CD8-positive, alpha-beta memory T cell (primary cell): ENCODE measurements at regions of chr14 and their contacts with region 1.

Region 1: GRCh38 chr14:50860478-50861086 is 11.3 kb upstream of the ABHD12B start:
- DNase-seq: peak; percentile 79 to 91 (median 84)
- H3K4me3 ChIP-seq: peak overlapping the region; percentile 85
- H3K4me3 Mint-ChIP-seq: peak overlapping the region; percentile 90 to 99 (median 94)
- H3K27ac ChIP-seq: peak overlapping the region; percentile 43
- H3K27ac Mint-ChIP-seq: peak overlapping the region in 7 of 8 donors; percentile 88 to 96 (median 91)
- H3K4me1 ChIP-seq: peaks cover 7% of the 10 kb centered on the region
- H3K4me1 Mint-ChIP-seq: peaks cover 10 to 13% (median 10%) of the 10 kb centered on the region in 3 donors
- H3K27me3 ChIP-seq: no peaks in the 10 kb centered on the region
- H3K27me3 Mint-ChIP-seq: peaks cover 0 to 3% of the 10 kb centered on the region in 2 donors

Region 2: GRCh38 chr14:50619556-50620141 is 240.9 kb before region 1 on chr14:
- CTCF ChIA-PET with region 1: interaction called, 12 read pairs
- POLR2A ChIA-PET with region 1: no interaction called
- DNase-seq: no peak
- H3K4me3 ChIP-seq: no peak overlapping the region
- H3K4me3 Mint-ChIP-seq: no peak overlapping the region
- H3K27ac ChIP-seq: no peak overlapping the region
- H3K27ac Mint-ChIP-seq: no peak overlapping the region
- H3K4me1 ChIP-seq: no peaks in the 10 kb centered on the region
- H3K4me1 Mint-ChIP-seq: no peaks in the 10 kb centered on the region
- H3K27me3 ChIP-seq: no peaks in the 10 kb centered on the region
- H3K27me3 Mint-ChIP-seq: no peaks in the 10 kb centered on the region

Region 3: GRCh38 chr14:50778721-50779483 is 81.7 kb before region 1 on chr14:
- CTCF ChIA-PET with region 1: interaction called, 122 read pairs
- POLR2A ChIA-PET with region 1: interaction called, 14 read pairs
- DNase-seq: no peak
- H3K4me3 ChIP-seq: no peak overlapping the region
- H3K4me3 Mint-ChIP-seq: peak overlapping the region in 6 of 7 donors; percentile 2 to 49 (median 33)
- H3K27ac ChIP-seq: no peak overlapping the region
- H3K27ac Mint-ChIP-seq: peak overlapping the region; percentile 27 to 95 (median 82)
- H3K4me1 ChIP-seq: peaks cover 39% of the 10 kb centered on the region
- H3K4me1 Mint-ChIP-seq: peaks cover 54 to 84% (median 68%) of the 10 kb centered on the region in 3 donors
- H3K27me3 ChIP-seq: no peaks in the 10 kb centered on the region
- H3K27me3 Mint-ChIP-seq: no peaks in the 10 kb centered on the region

Region 4: GRCh38 chr14:50808053-50808452 is 52.5 kb before region 1 on chr14:
- CTCF ChIA-PET with region 1: interaction called, 10 read pairs
- POLR2A ChIA-PET with region 1: no interaction called
- DNase-seq: no peak
- H3K4me3 ChIP-seq: no peak overlapping the region
- H3K4me3 Mint-ChIP-seq: peak overlapping the region in 1 of 7 donors; percentile 48
- H3K27ac ChIP-seq: no peak overlapping the region
- H3K27ac Mint-ChIP-seq: peak overlapping the region in 3 of 8 donors; percentile 32 to 48 (median 46)
- H3K4me1 ChIP-seq: peaks cover 42% of the 10 kb centered on the region
- H3K4me1 Mint-ChIP-seq: peaks cover 40 to 77% (median 64%) of the 10 kb centered on the region in 3 donors
- H3K27me3 ChIP-seq: no peaks in the 10 kb centered on the region
- H3K27me3 Mint-ChIP-seq: no peaks in the 10 kb centered on the region

Region 5: GRCh38 chr14:50839048-50839447 is 21.5 kb before region 1 on chr14:
- CTCF ChIA-PET with region 1: interaction called, 15 read pairs
- POLR2A ChIA-PET with region 1: interaction called, 7 read pairs
- DNase-seq: no peak
- H3K4me3 ChIP-seq: no peak overlapping the region
- H3K4me3 Mint-ChIP-seq: no peak overlapping the region
- H3K27ac ChIP-seq: no peak overlapping the region
- H3K27ac Mint-ChIP-seq: no peak overlapping the region
- H3K4me1 ChIP-seq: peaks cover 18% of the 10 kb centered on the region
- H3K4me1 Mint-ChIP-seq: peaks cover 17 to 27% (median 22%) of the 10 kb centered on the region in 3 donors
- H3K27me3 ChIP-seq: no peaks in the 10 kb centered on the region
- H3K27me3 Mint-ChIP-seq: peaks cover 0 to 2% of the 10 kb centered on the region in 2 donors

Region 6: GRCh38 chr14:50892255-50892654 is 31.7 kb after region 1 on chr14:
- CTCF ChIA-PET with region 1: no interaction called
- POLR2A ChIA-PET with region 1: no interaction called
- DNase-seq: no peak
- H3K4me3 ChIP-seq: no peak overlapping the region
- H3K4me3 Mint-ChIP-seq: no peak overlapping the region
- H3K27ac ChIP-seq: no peak overlapping the region
- H3K27ac Mint-ChIP-seq: no peak overlapping the region
- H3K4me1 ChIP-seq: no peaks in the 10 kb centered on the region
- H3K4me1 Mint-ChIP-seq: no peaks in the 10 kb centered on the region
- H3K27me3 ChIP-seq: no peaks in the 10 kb centered on the region
- H3K27me3 Mint-ChIP-seq: peaks cover 6 to 21% of the 10 kb centered on the region in 2 donors

Region 7: GRCh38 chr14:50906326-50907065 is 45.9 kb after region 1 on chr14:
- CTCF ChIA-PET with region 1: no interaction called
- POLR2A ChIA-PET with region 1: no interaction called
- DNase-seq: no peak
- H3K4me3 ChIP-seq: no peak overlapping the region
- H3K4me3 Mint-ChIP-seq: no peak overlapping the region
- H3K27ac ChIP-seq: no peak overlapping the region
- H3K27ac Mint-ChIP-seq: no peak overlapping the region
- H3K4me1 ChIP-seq: no peaks in the 10 kb centered on the region
- H3K4me1 Mint-ChIP-seq: no peaks in the 10 kb centered on the region
- H3K27me3 ChIP-seq: no peaks in the 10 kb centered on the region
- H3K27me3 Mint-ChIP-seq: peaks cover 0 to 24% of the 10 kb centered on the region in 2 donors